ENCODE measurements at regions of chr2 and their contacts with region 1.

Region 1: DNA sequence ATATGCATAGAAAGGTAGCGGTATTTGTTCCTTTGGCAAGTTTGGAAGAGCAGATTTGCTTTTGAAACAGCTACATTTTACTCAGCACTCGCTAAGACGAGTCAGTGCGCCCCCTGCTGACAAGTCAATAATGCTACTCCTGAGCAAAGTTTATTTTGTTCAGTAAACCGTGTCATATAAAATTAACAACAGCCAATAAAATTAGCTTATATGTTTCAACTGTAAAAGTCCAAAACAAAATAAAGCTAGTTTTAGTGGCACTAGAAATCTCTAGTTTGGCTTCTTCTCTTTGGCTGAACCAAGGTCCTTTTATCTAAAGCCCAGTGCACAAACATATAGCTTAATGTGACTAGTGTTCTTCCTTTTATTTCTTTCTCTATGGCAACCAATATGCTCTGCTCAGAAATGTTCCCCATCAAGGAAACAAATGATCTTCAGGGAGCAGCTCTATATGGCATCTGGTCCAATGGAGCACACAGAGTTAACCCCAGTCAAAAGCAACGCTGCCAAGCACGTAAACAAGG is 4.2 kb upstream of the POU3F3 start:
- DNase-seq: no peak
- H3K4me3 ChIP-seq: no peak overlapping the region
- H3K27me3 ChIP-seq: peaks cover 57% of the 10 kb centered on the region
- CTCF ChIP-seq: peak; percentile 72

Region 2: GRCh38 chr2:104812281-104812680 is 37.4 kb before region 1 on chr2:
- CTCF ChIA-PET with region 1: no interaction called
- POLR2A ChIA-PET with region 1: no interaction called
- DNase-seq: no peak
- H3K4me3 ChIP-seq: no peak overlapping the region
- H3K27me3 ChIP-seq: no peaks in the 10 kb centered on the region
- CTCF ChIP-seq: no peak

Region 3: DNA sequence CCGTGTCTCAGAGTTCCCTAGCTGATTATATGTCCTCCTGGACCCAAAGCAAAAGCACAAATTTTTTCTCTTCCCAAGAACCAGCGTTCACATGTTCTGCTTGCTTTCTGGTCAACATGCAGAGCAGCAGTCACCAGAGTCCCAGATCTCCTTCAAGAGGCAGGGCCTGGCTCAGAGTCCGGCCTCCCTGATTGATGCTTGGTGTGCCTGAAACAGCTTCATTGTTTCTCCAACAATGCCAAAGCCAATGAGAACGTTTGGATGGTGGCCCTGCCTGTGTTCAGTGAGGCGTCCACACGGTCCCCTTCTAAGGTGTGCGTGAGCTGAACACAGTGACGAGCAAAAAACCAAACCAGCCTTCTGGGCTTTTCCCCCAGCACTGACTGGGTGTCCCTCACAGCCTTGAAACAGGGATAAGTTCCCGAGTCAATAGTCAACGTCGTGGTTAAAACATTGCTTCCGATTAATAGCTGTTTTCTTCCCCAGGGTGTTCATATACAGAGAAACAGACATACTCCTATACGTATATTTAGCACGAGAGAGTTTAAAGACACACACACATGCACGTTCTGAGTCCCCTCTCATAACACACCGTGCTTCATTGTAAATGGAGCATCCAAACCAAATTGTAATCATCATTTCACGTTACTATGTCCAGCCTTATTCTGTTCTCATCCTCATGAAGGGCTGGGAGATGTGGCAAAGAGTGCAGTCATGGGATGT is 15.1 kb before region 1 on chr2:
- CTCF ChIA-PET with region 1: interaction called, 33 read pairs
- POLR2A ChIA-PET with region 1: no interaction called
- DNase-seq: no peak
- H3K4me3 ChIP-seq: no peak overlapping the region
- H3K27me3 ChIP-seq: no peaks in the 10 kb centered on the region
- CTCF ChIP-seq: no peak

Region 4: DNA sequence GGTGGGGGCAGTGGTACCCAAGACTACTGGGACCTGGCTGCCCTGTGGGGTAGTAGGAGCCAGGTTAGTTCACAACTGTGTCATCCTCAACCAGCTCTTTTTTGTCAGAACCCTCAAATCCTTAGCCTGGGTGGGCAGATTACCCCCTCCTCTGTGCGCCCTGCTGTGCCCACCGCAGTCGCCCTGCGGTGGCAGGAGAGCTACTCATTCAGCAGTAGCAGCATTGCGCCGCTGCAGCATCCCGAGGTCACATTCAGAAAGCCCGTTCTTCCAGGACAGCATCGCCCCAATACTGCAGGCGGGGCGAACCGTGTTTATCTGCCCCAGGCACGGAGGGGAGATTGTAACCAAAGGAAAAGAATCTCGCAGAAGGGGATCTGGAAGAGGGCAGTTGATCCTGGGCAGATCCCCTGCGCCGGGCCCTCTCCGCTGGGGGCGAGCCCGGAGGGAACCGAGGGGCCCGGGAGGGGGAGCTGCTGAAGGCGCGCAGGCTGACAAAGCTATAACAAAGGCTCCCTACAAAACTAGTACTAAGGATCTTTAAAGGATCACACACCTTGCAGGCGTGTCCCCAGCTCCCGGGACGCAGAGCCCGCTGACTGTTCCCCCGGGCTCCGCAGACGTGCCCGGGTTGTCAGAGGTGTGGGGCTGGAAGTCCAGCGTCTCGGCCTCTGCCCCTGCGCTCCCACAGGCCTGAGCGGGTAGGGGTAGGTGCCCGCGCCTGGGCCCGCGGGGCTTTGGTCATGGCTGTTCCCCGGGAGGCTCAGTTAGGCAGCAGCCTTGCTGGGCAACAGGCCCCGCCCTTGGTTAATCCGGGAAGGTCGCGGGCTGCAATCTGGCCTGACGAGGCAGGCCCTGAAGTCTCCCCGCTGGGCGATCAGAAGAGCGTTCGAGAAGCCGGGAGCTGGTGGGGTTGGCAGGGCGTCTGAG is 17.5 kb after region 1 on chr2:
- CTCF ChIA-PET with region 1: interaction called, 16 read pairs
- POLR2A ChIA-PET with region 1: no interaction called
- DNase-seq: no peak
- H3K4me3 ChIP-seq: no peak overlapping the region
- H3K27me3 ChIP-seq: peaks cover 34% of the 10 kb centered on the region
- CTCF ChIP-seq: no peak